ENCODE measurements at regions of chr7 and their contacts with region 1.

Region 1: DNA sequence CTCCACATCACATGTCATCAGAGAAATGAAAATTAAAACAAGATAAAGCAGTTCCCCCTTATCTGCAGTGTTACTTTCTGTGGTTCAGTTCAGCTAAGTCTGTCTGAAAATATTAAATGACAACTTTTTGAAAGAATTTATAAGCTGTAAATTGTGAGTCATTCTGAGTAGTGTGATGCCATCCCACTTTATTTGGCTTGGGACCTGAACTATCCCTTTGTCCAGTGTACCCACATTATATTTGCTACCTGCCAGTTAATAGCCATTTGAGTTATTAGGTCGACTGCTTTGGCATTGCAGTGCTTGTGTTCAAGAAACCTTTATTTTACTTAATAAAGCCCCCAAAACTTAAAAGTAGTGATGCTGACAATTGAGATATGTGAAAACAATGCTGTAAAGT is 804.2 kb downstream of the ANKRD7 start:
- DNase-seq: no peak
- H3K4me3 ChIP-seq: no peak overlapping the region
- H3K27ac ChIP-seq: no peak overlapping the region
- H3K4me1 ChIP-seq: no peaks in the 10 kb centered on the region
- H3K27me3 ChIP-seq: no peaks in the 10 kb centered on the region
- CTCF ChIP-seq: no peak
- POLR2A ChIP-seq: no peak

Region 2: GRCh38 chr7:119010635-119011034 is 18.1 kb before region 1 on chr7:
- intact Hi-C with region 1: loop called (anchors 1 kb)
- DNase-seq: no peak
- H3K4me3 ChIP-seq: no peak overlapping the region
- H3K27ac ChIP-seq: no peak overlapping the region
- H3K4me1 ChIP-seq: no peaks in the 10 kb centered on the region
- H3K27me3 ChIP-seq: no peaks in the 10 kb centered on the region
- CTCF ChIP-seq: no peak
- POLR2A ChIP-seq: no peak